KBM-7 (cell line): ENCODE measurements at regions of chr6 and their contacts with region 1.

Region 1: GRCh38 chr6:133916650-133917151 is 27.8 kb downstream of the TCF21 start:
- DNase-seq: peak; percentile 82

Region 2: DNA sequence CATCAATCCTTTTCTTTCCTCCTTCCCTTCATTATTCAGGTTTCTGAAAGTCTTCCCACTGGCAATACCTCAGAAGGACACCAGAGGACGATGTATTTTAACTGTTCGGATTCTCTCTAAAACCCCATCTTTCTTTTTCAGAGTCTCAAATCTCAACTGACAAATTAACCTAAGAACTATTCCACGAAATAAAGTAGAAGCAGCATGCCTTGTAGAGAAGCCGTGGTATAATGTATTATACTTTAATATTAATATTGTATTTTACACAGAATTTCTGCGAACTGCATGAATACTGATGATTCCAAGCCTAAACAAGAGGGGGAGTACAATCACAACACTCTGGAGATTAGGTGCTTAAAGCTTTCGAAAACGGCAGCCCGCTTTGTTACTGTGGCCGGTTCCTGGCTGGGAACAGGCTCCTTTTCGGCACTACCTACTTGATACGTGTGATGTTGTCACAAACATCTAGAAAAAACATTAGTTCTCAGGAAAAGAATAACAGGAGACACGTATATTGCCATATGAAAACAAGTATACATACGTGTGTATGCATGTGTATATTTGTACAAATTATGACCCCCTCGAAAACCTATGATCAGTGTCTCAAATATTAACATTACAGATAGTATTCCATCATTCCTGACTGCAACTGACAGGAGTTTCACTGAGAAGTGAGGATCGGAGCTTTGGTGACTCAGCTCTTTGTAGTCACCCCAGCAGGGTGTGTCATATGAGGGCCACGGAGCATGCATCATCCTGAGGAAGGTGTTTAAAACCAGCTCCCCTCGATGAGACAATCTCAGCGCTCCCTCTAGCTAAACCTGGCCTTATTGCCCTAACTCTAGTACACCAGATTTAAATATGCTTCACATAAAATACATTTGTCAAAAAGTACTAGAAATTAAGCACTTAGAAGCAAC is 347.5 kb before region 1 on chr6:
- in situ Hi-C with region 1: loop called (anchors 25 kb)
- DNase-seq: peak; percentile 32